ENCODE measurements at regions of chrX and their contacts with region 1.

Region 1: GRCh38 chrX:85111347-85111746 is 107.7 kb downstream of the APOOL start:
- DNase-seq: no peak
- ATAC-seq: no peak
- H3K4me3 ChIP-seq: no peak overlapping the region
- H3K27ac ChIP-seq: no peak overlapping the region
- H3K4me1 ChIP-seq: no peaks in the 10 kb centered on the region
- H3K27me3 ChIP-seq: no peaks in the 10 kb centered on the region
- CTCF ChIP-seq: peak; percentile 58 to 69 (median 64)
- EP300 ChIP-seq: no peak
- POLR2A ChIP-seq: no peak
- RAD21 ChIP-seq: peak; percentile 73

Region 2: DNA sequence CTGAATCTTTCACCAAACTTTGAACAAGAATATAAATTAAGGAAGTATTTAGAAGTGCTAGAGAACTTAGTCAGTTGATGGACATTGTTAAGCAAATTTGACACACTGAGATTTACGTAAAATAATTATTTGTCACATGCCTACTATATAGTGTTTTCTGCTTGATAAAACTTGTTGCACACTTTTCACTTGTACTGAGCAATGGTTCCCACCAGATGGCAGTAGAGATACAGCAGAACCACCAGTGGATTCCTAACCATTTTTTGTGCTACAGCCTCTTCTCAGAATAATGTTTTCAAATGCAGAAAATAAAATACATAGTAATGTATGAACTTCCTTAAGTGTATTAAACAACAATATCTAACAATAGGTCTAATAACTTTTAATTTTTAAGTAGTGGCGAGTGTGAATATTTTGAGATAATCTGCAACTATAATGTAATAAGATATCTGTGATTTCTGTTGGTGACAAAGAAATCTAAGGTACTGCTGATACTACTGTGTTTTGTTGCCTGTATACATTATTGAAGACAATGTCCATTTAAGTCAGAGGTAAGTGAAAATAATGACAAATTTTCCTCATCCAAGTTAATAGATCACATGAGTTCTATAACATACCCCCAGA is 26.5 kb before region 1 on chrX:
- CTCF ChIA-PET with region 1: interaction called, 18 read pairs
- POLR2A ChIA-PET with region 1: no interaction called
- RAD21 ChIA-PET with region 1: interaction called, 3 read pairs
- SMC1A ChIA-PET with region 1: interaction called, 8 read pairs
- in situ Hi-C with region 1: no loop called
- intact Hi-C with region 1: no loop called
- DNase-seq: peak; percentile 8
- ATAC-seq: peak; percentile 82
- H3K4me3 ChIP-seq: no peak overlapping the region
- H3K27ac ChIP-seq: no peak overlapping the region
- H3K4me1 ChIP-seq: no peaks in the 10 kb centered on the region
- H3K27me3 ChIP-seq: no peaks in the 10 kb centered on the region
- CTCF ChIP-seq: peak; percentile 65 to 81 (median 73)
- EP300 ChIP-seq: no peak
- POLR2A ChIP-seq: no peak
- RAD21 ChIP-seq: peak; percentile 65

Region 3: GRCh38 chrX:85136409-85136808 is 25.1 kb after region 1 on chrX:
- CTCF ChIA-PET with region 1: interaction called, 10 read pairs
- POLR2A ChIA-PET with region 1: no interaction called
- RAD21 ChIA-PET with region 1: interaction called, 3 read pairs
- SMC1A ChIA-PET with region 1: interaction called, 3 read pairs
- in situ Hi-C with region 1: no loop called
- intact Hi-C with region 1: no loop called
- DNase-seq: no peak
- ATAC-seq: no peak
- H3K4me3 ChIP-seq: no peak overlapping the region
- H3K27ac ChIP-seq: no peak overlapping the region
- H3K4me1 ChIP-seq: no peaks in the 10 kb centered on the region
- H3K27me3 ChIP-seq: no peaks in the 10 kb centered on the region
- CTCF ChIP-seq: no peak
- EP300 ChIP-seq: no peak
- POLR2A ChIP-seq: no peak
- RAD21 ChIP-seq: no peak

Region 4: DNA sequence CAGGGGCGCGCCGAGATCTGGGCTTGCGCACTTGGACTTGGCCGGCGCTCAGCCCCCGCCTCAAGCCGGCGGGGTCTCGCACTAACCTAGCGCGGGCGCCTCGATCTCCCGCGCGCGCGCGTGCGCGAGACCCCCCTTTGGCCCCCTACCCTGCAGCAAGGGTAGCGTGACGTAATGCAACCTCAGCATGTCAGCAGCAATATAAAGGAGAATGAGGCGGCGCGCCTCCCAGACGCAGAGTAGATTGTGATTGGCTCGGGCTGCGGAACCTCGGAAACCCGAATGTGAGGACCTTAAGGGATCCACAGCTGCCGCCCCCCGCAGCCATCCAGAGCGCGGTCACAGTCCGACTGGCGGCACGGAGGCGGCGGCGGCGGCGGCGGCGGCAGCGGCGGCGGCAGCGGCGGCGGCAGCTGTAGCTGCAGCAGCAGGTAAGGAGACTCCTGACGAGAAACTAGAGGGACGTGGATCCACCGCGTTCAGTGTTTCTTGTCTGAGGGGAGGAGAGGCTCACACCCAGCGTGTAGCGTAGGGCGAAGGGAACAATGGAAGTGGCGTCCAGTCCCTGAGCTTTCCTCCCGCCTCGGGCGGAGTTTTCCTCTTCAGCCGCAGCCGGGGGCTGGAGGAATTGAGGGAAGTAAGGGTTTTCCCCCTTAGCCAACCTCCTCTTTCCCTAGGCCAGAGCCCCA is 132.6 kb after region 1 on chrX and contains the starts of genes SATL1 and ZNF711:
- CTCF ChIA-PET with region 1: interaction called, 3 read pairs
- POLR2A ChIA-PET with region 1: no interaction called
- RAD21 ChIA-PET with region 1: no interaction called
- SMC1A ChIA-PET with region 1: interaction called, 4 read pairs
- in situ Hi-C with region 1: no loop called
- intact Hi-C with region 1: loop called (anchors 2 kb)
- DNase-seq: no peak
- ATAC-seq: peak; percentile 80
- H3K4me3 ChIP-seq: peak within 1 kb of the TSS; percentile 75
- H3K27ac ChIP-seq: no peak within 1 kb of the TSS
- H3K4me1 ChIP-seq: no peaks in the 10 kb centered on the region
- H3K27me3 ChIP-seq: no peaks in the 10 kb centered on the region
- CTCF ChIP-seq: no peak
- EP300 ChIP-seq: no peak
- POLR2A ChIP-seq: no peak
- RAD21 ChIP-seq: no peak
- polyA plus RNA-seq, gene SATL1: not detected
- polyA plus RNA-seq, gene ZNF711: 1.00 to 1.4 TPM

Region 5: DNA sequence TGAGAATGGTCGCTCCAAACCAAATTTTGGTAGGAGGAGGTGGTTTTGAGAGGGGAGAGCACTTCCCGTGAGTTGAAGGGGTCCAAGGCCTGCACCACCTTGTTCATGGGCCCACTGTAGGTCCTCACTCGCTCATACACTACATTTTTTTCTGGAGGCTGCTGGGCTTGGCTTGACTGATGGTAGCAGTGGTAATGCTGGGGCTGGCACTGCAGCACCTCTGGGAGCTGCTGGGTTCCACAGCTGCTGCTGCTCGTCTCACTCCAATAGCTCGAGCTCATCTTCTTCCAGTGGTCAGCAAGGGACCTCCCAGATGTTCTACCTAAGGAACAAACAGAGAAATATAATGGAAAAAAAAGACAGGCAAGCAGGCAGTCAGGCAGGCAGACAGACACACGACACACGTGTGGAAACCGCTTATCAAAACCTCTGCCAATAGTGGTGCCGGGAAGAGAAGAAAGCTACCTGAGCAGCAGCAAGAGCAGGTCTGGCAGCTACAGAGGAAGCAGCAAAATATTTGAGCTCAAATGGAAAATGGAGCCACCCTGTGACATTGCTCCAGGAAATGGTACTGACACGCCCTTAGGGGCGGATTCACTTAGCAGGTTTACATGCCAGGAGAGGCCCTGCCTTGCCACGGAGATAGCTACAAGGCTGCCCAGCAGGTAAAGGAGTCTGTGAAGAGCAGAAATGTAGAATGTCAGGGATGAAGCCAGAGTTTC is 268.0 kb after region 1 on chrX and contains the start of gene POF1B:
- CTCF ChIA-PET with region 1: interaction called, 7 read pairs
- POLR2A ChIA-PET with region 1: no interaction called
- RAD21 ChIA-PET with region 1: interaction called, 5 read pairs
- SMC1A ChIA-PET with region 1: interaction called, 3 read pairs
- in situ Hi-C with region 1: no loop called
- intact Hi-C with region 1: loop called (anchors 5 kb)
- DNase-seq: peak; percentile 23
- ATAC-seq: peak; percentile 87
- H3K4me3 ChIP-seq: peak within 1 kb of the TSS; percentile 50
- H3K27ac ChIP-seq: peak within 1 kb of the TSS; percentile 41
- H3K4me1 ChIP-seq: no peaks in the 10 kb centered on the region
- H3K27me3 ChIP-seq: no peaks in the 10 kb centered on the region
- CTCF ChIP-seq: no peak
- EP300 ChIP-seq: no peak
- POLR2A ChIP-seq: no peak
- RAD21 ChIP-seq: no peak
- polyA plus RNA-seq, gene POF1B: 0.14 to 0.27 TPM

Region 6: DNA sequence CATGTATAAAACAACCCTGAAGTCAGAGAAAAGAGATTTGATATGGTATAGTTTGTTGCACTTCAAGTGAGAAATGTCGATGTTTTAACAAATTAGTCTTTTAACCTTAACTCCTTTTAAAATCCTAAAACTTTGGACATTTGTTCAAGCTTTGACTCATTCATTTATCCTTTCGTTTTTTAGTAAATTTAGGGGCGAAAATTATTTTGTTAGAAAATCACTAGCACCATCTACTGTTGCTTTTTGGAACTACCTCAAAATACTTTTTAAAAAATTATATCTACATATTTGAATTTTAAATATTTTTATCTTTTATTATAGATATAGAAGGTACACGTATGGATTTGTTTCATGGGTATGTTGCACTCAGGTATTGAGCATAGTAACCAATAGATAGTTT is 433.3 kb after region 1 on chrX:
- CTCF ChIA-PET with region 1: interaction called, 66 read pairs
- POLR2A ChIA-PET with region 1: interaction called, 4 read pairs
- RAD21 ChIA-PET with region 1: interaction called, 13 read pairs
- SMC1A ChIA-PET with region 1: interaction called, 19 read pairs
- in situ Hi-C with region 1: loop called (anchors 5 kb)
- intact Hi-C with region 1: loop called (anchors 1 kb)
- DNase-seq: no peak
- ATAC-seq: no peak
- H3K4me3 ChIP-seq: no peak overlapping the region
- H3K27ac ChIP-seq: no peak overlapping the region
- H3K4me1 ChIP-seq: no peaks in the 10 kb centered on the region
- H3K27me3 ChIP-seq: no peaks in the 10 kb centered on the region
- CTCF ChIP-seq: peak in 2 of 3 experiments; percentile 23 to 34; a peak in 3 of 6 replicates
- EP300 ChIP-seq: no peak
- POLR2A ChIP-seq: no peak
- RAD21 ChIP-seq: 0 out of 2 replicates have a peak, but pooled peaks have one; percentile 35